Left cardiac atrium (tissue), 4 donors: ENCODE measurements at regions of chr13 and their contacts with region 1.

Region 1: DNA sequence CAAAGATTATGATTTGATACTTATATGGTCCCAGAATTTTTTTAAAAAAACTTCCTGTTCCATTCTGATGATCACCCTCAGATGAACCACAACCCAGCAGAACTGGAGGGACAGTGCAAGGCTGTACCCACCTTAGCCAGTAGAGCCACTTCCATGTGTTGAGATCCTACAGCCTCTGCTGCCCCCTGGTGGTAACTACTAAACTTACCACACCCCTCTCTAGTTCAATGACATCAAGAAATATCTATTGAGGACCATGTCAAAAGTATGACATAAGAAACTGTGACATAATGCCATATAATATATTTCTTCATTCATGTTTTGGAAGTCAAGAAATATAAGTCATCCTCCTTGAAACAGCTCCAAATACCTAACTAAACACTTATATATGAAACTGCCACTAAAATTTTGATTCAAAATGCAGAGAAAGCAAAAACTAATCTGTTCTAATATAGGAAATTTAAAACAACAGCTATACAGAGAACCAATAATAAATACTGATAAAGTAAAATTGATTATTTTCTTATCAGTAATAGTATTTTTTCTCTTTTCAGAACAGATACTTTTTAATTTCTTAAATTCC is 412.6 kb downstream of the KCTD12 start:
- DNase-seq: peak; percentile 72
- ATAC-seq: peak; percentile 95 to 97

Region 2: GRCh38 chr13:75687150-75687763 is 786.4 kb before region 1 on chr13:
- intact Hi-C with region 1: loop called in 1 of 2 experiments (anchors 10 kb)
- DNase-seq: no peak
- ATAC-seq: peak in 1 of 2 donors; percentile 57

Region 3: GRCh38 chr13:75876360-75877050 is 597.1 kb before region 1 on chr13:
- intact Hi-C with region 1: loop called (anchors 2 to 5 kb)
- DNase-seq: peak; percentile 50
- ATAC-seq: peak; percentile 90 to 93

Region 4: GRCh38 chr13:76019421-76020044 is 454.1 kb before region 1 on chr13:
- intact Hi-C with region 1: loop called in 1 of 2 experiments (anchors 10 kb)
- DNase-seq: peak; percentile 22
- ATAC-seq: peak in 1 of 2 donors; percentile 44

Region 5: GRCh38 chr13:76446191-76446590 is 27.5 kb before region 1 on chr13:
- intact Hi-C with region 1: no loop called
- DNase-seq: no peak
- ATAC-seq: no peak

Region 6: DNA sequence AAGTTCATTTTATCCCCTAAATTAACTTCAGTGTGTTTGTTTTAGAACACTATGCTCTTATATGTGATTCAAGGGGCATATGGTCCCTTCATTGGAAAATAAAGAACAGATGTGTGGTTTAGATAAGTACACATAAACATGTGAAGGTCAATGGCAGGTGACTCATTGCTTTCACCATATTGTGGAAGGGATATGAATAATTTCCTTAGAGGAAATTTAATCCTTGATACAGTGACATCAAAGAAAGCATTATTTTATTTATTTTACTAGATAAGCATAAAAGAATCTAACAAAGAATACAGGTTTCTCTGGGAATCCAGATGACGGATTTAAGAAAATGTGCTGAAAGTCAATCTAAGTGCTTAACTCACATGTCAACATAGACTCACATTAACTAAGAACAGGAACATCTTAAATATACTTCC is 39.1 kb after region 1 on chr13:
- intact Hi-C with region 1: no loop called
- DNase-seq: no peak
- ATAC-seq: peak; percentile 53 to 63

Region 7: GRCh38 chr13:76886292-76887075 is 412.8 kb after region 1 on chr13 and contains the start of gene KCTD12:
- intact Hi-C with region 1: loop called in 1 of 2 experiments (anchors 5 kb)
- DNase-seq: peak; percentile 94
- ATAC-seq: peak; percentile 85
- total RNA-seq, gene KCTD12: 67.1 to 67.9 TPM

Region 8: DNA sequence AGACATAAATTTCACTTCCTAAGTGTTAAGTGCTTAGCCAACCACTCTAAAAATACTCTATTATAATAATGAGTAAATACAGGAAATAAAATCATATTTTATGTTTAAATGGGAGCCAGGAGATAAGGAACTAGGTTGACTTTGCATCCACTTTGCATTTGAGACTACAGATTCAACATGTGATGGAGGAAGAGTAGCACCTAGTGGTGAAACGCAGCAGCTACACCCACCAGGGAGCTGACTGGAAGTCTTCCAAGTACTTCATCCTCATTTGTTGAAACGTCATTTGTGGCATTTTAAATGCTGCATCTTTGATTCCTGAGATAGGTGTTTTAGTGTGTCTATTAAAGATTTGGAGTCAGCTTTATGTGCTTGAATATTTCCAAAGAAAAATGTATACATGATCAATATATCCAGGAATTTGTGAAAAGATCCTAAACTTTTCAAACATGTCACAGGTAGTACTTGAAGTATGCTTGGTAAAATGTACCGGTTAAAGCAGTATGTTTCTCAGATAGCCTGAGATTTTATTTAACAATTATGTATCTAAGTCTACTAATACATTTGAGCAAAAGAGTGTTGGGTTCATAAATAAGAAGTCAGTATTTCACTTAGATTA is 430.0 kb after region 1 on chr13:
- intact Hi-C with region 1: loop called in 1 of 2 experiments (anchors 5 kb)
- DNase-seq: peak; percentile 48
- ATAC-seq: peak; percentile 87 to 89